B cell (primary cell): ENCODE measurements at regions of chr2 and their contacts with region 1.

Region 1: DNA sequence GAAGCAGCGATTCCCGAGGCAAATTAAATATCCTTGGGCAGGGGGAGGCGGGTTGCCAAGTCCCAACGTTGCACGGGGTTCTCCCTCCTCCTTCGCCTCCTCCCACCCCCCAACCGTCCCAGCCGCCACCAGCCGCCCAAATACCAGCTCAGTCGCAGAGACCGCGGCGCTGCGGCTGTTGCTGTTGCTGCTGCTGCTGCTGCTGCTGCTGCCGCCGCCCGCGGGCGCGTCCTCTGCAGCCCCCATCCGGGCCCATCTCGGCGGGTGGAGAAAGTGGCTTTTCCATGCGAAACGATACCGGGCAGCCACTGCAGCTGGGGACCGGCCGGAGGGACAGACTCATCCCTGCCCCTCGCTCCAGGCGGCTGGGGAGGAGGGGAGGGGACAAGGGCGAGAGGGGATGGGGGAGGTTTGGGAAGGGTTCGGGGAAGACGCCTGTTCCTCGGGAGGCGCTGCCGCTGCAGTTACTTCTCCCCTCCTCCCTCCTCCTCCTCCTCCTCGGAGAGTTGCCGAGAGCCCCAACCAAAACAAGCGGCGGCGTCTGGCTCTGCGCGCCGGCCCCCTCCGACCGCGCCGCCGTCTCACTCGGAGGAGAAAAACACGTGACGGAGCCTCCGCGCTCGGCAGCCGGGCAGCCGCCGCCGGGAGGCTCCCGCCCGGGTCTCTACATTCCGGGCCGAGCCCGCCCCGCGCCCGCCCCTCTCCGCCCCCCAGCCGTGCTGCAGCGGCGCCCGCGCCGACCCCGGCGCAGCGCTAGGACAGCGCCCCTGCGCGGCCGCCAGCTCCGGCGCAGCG is at the start of gene IRS1:
- DNase-seq: peak; percentile 81
- ATAC-seq: peak; percentile 51
- H3K4me3 ChIP-seq: peak within 1 kb of the TSS; percentile 46 to 79 (median 75)
- H3K4me3 Mint-ChIP-seq: peak within 1 kb of the TSS; percentile 95
- H3K27ac ChIP-seq: peak within 1 kb of the TSS; percentile 30 to 72
- H3K27ac Mint-ChIP-seq: peak within 1 kb of the TSS; percentile 94
- H3K4me1 ChIP-seq: peaks cover 17 to 26% of the 10 kb centered on the region in 2 donors
- H3K4me1 Mint-ChIP-seq: peaks cover 40% of the 10 kb centered on the region
- H3K27me3 ChIP-seq: peaks cover 0 to under 1% (median 0%) of the 10 kb centered on the region in 4 experiments
- H3K27me3 Mint-ChIP-seq: peaks cover 5% of the 10 kb centered on the region
- CTCF ChIP-seq: peak; percentile 62
- total RNA-seq, gene IRS1: 10.0 and 11.9 TPM in 2 replicates

Region 2: DNA sequence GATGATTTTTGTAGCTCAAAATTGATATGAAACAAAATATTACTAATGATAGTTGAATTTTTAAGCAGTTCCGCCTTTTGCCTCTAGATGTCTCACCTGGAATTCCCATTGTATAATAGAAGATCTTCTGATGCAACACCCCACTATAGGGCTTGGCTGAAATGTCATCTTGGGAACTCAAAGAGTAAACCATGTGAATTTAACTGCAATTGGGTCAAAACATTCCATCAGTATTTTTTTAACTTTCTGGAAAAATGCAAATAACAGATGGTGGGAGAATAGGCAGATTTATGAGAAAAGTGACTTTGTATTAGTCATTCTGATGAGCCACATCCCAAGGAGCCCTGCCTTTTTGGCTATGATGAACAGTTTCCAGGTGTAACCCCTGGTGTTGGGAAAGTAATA is 909.9 kb before region 1 on chr2:
- CTCF ChIA-PET with region 1: interaction called, 35 read pairs
- POLR2A ChIA-PET with region 1: no interaction called
- intact Hi-C with region 1: loop called (anchors 1 kb)
- DNase-seq: peak; percentile 40
- ATAC-seq: no peak
- H3K4me3 ChIP-seq: no peak overlapping the region
- H3K4me3 Mint-ChIP-seq: no peak overlapping the region
- H3K27ac ChIP-seq: no peak overlapping the region
- H3K27ac Mint-ChIP-seq: no peak overlapping the region
- H3K4me1 ChIP-seq: no peaks in the 10 kb centered on the region
- H3K4me1 Mint-ChIP-seq: no peaks in the 10 kb centered on the region
- H3K27me3 ChIP-seq: no peaks in the 10 kb centered on the region
- H3K27me3 Mint-ChIP-seq: peaks cover 9% of the 10 kb centered on the region
- CTCF ChIP-seq: peak; percentile 78

Region 3: DNA sequence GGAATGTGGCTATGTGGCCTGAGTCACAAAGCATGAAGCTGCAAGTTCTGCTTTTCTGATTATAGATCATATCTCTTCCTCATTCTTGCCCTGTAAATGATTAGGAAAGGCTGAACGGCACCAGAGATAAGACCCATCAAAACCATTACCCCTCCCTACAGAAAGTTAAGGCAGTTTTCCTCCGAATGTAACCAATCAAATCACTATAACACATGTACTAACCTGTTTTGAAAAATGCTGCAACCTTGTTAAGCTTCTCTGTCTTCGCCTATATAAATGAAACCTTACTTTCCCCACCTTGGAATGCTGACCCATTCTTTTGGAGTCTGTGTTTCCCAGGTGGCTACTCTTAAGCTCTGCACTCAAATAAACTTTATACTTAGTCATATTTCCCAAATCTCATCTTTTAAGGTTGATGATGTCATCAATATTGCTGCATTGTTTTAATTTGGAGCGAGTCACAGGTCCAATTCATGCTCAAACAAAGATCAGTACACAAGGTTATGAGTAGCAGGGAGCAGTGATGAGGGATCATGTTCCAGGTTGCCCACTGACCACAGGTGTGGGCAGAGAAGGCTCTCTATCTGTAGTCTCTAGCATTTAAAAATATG is 662.1 kb before region 1 on chr2:
- CTCF ChIA-PET with region 1: no interaction called
- POLR2A ChIA-PET with region 1: no interaction called
- intact Hi-C with region 1: no loop called
- DNase-seq: no peak
- ATAC-seq: peak; percentile 31
- H3K4me3 ChIP-seq: no peak overlapping the region
- H3K4me3 Mint-ChIP-seq: no peak overlapping the region
- H3K27ac ChIP-seq: peak overlapping the region in 1 of 2 donors; percentile 66
- H3K27ac Mint-ChIP-seq: peak overlapping the region; percentile 1
- H3K4me1 ChIP-seq: peaks cover 17 to 23% of the 10 kb centered on the region in 2 donors
- H3K4me1 Mint-ChIP-seq: peaks cover 18% of the 10 kb centered on the region
- H3K27me3 ChIP-seq: no peaks in the 10 kb centered on the region
- H3K27me3 Mint-ChIP-seq: peaks cover 10% of the 10 kb centered on the region
- CTCF ChIP-seq: no peak

Region 4: DNA sequence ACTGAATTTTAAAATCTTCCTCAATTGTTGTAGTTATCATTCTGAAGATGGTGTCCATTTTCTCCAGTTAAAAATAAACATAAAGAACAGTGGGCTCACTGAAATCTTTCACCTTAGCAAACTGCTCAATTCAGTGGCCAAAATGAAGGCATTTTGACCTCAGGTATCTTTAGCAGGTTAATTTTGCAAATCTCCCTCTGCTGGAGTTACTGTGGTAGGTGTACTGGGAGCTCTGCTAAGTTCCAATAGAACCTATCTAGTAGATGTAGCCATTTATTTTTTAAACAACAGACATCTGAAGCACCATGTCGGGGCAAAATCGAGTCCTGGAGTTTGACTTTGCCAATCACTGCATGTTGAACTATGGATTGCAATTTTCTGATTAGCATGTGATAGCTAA is 176.9 kb before region 1 on chr2:
- CTCF ChIA-PET with region 1: interaction called, 4 read pairs
- POLR2A ChIA-PET with region 1: no interaction called
- intact Hi-C with region 1: loop called (anchors 10 kb)
- DNase-seq: no peak
- ATAC-seq: no peak
- H3K4me3 ChIP-seq: no peak overlapping the region
- H3K4me3 Mint-ChIP-seq: no peak overlapping the region
- H3K27ac ChIP-seq: no peak overlapping the region
- H3K27ac Mint-ChIP-seq: no peak overlapping the region
- H3K4me1 ChIP-seq: no peaks in the 10 kb centered on the region
- H3K4me1 Mint-ChIP-seq: no peaks in the 10 kb centered on the region
- H3K27me3 ChIP-seq: no peaks in the 10 kb centered on the region
- H3K27me3 Mint-ChIP-seq: peaks cover 20% of the 10 kb centered on the region
- CTCF ChIP-seq: peak; percentile 16

Region 5: DNA sequence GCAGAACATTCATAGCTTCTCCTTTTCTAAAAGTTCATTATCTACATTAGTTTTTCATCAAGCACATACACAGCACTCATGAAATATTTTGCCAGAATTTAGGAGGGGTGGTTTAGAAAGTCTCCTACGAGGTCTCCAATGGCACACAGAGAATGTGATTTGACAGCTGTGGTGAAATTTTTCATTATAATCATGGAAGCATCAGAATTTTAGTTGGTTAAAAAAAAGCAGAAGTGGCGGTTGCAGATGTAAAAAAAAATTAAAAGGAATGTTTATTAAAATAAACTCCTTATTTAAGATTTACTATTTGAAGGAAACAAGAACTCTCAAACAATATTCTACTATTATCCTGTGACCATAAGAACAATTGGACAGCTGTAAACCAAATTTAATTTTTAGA is 25.7 kb after region 1 on chr2:
- CTCF ChIA-PET with region 1: interaction called, 10 read pairs
- POLR2A ChIA-PET with region 1: interaction called, 3 read pairs
- intact Hi-C with region 1: no loop called
- DNase-seq: no peak
- ATAC-seq: no peak
- H3K4me3 ChIP-seq: no peak overlapping the region
- H3K4me3 Mint-ChIP-seq: no peak overlapping the region
- H3K27ac ChIP-seq: no peak overlapping the region
- H3K27ac Mint-ChIP-seq: no peak overlapping the region
- H3K4me1 ChIP-seq: no peaks in the 10 kb centered on the region
- H3K4me1 Mint-ChIP-seq: peaks cover 12% of the 10 kb centered on the region
- H3K27me3 ChIP-seq: no peaks in the 10 kb centered on the region
- H3K27me3 Mint-ChIP-seq: no peaks in the 10 kb centered on the region
- CTCF ChIP-seq: no peak

Region 6: GRCh38 chr2:226984750-226985582 is 185.6 kb after region 1 on chr2:
- CTCF ChIA-PET with region 1: interaction called, 70 read pairs
- POLR2A ChIA-PET with region 1: no interaction called
- intact Hi-C with region 1: loop called (anchors 1 kb)
- DNase-seq: peak; percentile 72
- ATAC-seq: peak; percentile 88
- H3K4me3 ChIP-seq: no peak overlapping the region
- H3K4me3 Mint-ChIP-seq: no peak overlapping the region
- H3K27ac ChIP-seq: peak overlapping the region; percentile 50 to 80
- H3K27ac Mint-ChIP-seq: peak overlapping the region; percentile 86
- H3K4me1 ChIP-seq: peaks cover 18 to 20% of the 10 kb centered on the region in 2 donors
- H3K4me1 Mint-ChIP-seq: peaks cover 26% of the 10 kb centered on the region
- H3K27me3 ChIP-seq: no peaks in the 10 kb centered on the region
- H3K27me3 Mint-ChIP-seq: no peaks in the 10 kb centered on the region
- CTCF ChIP-seq: peak; percentile 90